ENCODE measurements at regions of chr15 and their contacts with region 1.

Region 1: GRCh38 chr15:63891079-63891767 is 57.5 kb upstream of the HERC1 start:
- DNase-seq: peak; percentile 74
- ATAC-seq: peak; percentile 71
- H3K4me3 Mint-ChIP-seq: no peak overlapping the region
- H3K27ac Mint-ChIP-seq: no peak overlapping the region
- H3K4me1 Mint-ChIP-seq: peaks cover 35% of the 10 kb centered on the region
- H3K27me3 Mint-ChIP-seq: no peaks in the 10 kb centered on the region
- CTCF ChIP-seq: peak; percentile 53

Region 2: GRCh38 chr15:62995047-62995674 is 896.1 kb before region 1 on chr15:
- CTCF ChIA-PET with region 1: no interaction called
- POLR2A ChIA-PET with region 1: no interaction called
- intact Hi-C with region 1: no loop called
- DNase-seq: no peak
- ATAC-seq: no peak
- H3K4me3 Mint-ChIP-seq: no peak overlapping the region
- H3K27ac Mint-ChIP-seq: no peak overlapping the region
- H3K4me1 Mint-ChIP-seq: no peaks in the 10 kb centered on the region
- H3K27me3 Mint-ChIP-seq: peaks cover 27% of the 10 kb centered on the region
- CTCF ChIP-seq: no peak

Region 3: GRCh38 chr15:63752075-63752684 is 139.0 kb before region 1 on chr15:
- CTCF ChIA-PET with region 1: interaction called, 100 read pairs
- POLR2A ChIA-PET with region 1: interaction called, 5 read pairs
- intact Hi-C with region 1: loop called (anchors 1 kb)
- DNase-seq: no peak
- ATAC-seq: peak; percentile 83
- H3K4me3 Mint-ChIP-seq: no peak overlapping the region
- H3K27ac Mint-ChIP-seq: peak overlapping the region; percentile 59
- H3K4me1 Mint-ChIP-seq: peaks cover 3% of the 10 kb centered on the region
- H3K27me3 Mint-ChIP-seq: no peaks in the 10 kb centered on the region
- CTCF ChIP-seq: no peak

Region 4: DNA sequence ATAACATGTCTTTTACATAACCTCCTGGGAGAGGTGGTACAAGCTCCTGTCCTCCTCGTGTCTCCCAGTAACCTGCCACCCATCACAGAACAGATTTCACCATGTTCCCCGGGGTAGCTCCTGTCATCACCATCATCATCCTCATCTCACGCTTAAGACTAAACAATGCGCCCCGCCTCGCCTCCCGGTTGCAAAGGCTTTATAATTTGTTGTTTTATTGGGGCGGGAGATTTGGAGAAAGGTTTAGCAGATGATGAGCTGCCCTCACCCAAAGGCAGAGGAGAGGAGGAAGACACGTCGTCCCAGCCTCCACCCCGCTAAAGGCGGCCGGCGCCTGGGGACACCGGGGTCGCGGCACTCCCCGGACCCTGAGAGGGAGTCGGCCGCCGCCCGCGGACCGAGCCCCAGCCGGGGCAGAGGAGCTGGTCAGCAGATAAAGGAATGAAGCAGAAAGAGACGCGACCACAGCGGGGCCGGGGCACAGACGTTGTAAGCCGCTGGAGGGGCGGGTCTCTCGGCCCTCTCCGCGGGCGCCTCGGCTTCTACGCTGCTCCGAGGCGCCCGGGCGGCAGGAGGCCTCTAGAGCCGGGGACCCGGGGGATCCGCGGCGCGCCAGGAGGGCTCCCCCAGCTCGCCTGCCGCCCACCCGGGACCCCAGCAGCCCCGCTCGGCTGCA is 58.1 kb before region 1 on chr15:
- CTCF ChIA-PET with region 1: interaction called, 9 read pairs
- POLR2A ChIA-PET with region 1: interaction called, 3 read pairs
- intact Hi-C with region 1: loop called (anchors 1 kb)
- DNase-seq: peak; percentile 44
- ATAC-seq: peak; percentile 43
- H3K4me3 Mint-ChIP-seq: peak overlapping the region; percentile 97
- H3K27ac Mint-ChIP-seq: peak overlapping the region; percentile 74
- H3K4me1 Mint-ChIP-seq: peaks cover 48% of the 10 kb centered on the region
- H3K27me3 Mint-ChIP-seq: no peaks in the 10 kb centered on the region
- CTCF ChIP-seq: no peak

Region 5: DNA sequence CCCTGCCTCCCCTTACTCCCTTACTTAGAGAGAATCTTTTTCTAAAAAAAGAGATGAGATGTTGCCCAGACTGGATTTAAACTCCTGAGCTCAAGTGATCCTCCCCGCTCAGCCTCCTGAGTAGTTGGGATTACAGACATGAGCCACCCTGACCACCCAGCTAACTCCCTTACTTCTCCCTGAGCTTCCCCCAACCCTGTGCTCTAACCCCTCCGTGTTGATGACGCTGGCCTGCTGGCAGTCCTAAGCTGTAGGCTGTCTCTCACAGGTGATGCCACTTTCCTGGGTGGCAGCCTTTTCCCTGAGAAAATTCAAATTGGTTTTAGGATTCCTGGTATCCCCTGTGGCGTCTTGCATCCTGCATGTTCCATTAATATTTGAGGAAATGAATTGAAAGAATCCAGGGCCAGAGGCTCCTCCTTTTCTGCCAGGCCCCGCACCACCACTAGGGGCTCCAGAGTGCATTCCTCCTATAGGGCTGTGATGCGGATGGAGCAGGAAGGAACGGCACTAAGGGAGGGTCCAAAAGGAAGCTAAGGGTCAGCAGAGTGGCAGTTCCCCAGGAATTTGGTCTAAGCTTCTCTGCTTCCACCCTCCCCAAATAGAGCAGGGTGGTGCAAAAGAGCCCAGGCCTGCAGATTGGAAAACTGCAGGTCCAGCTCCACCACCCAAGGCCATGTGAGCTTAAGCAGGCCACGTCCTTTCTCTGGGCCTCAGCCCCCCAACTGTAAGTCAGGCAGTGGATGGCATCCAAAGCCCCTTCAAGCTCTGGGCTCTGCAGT is 54.0 kb after region 1 on chr15:
- CTCF ChIA-PET with region 1: interaction called, 16 read pairs
- POLR2A ChIA-PET with region 1: no interaction called
- intact Hi-C with region 1: no loop called
- DNase-seq: peak; percentile 52
- ATAC-seq: peak; percentile 89
- H3K4me3 Mint-ChIP-seq: no peak overlapping the region
- H3K27ac Mint-ChIP-seq: no peak overlapping the region
- H3K4me1 Mint-ChIP-seq: peaks cover 31% of the 10 kb centered on the region
- H3K27me3 Mint-ChIP-seq: no peaks in the 10 kb centered on the region
- CTCF ChIP-seq: peak; percentile 70

Region 6: DNA sequence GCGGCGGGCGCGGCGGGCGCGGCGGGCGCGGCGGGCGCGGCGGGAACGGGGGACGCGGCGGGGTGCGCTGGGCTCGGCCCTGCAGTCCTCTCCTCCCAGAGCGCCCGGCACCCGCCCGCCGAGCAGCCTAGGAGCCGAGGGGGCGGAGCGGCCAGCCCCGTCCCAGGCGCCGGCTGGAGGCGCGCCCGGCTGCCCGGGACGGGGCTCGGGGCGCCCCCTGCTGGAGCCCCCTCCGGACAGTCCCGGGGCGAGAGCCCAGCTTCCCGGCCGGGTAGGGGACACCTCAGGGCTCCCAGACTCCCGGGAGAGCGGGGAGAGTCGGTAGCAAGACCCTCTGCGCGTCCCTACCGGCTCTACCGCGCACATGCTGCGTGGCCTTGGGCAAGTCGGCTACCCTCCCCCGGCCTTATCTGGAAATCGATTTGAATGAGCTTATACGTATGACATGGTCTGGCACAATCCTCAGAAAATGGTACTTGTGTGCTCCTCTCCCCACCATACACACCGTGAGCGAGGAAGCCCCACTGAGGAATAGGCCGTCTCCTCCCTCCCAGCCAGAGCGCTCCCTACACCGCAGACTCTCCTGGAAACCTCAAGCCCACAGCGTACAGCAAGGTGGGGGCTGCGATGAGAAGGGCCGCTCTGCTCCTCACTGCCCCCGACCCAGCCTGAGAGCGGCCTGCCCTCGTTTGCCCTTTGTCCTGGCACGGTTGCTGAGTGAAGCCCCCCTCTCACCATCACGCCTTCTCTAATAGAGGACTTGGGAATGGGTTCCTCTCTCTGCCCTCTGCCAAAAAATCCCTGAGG is 155.3 kb after region 1 on chr15 and contains the start of gene DAPK2:
- CTCF ChIA-PET with region 1: interaction called, 4 read pairs
- POLR2A ChIA-PET with region 1: no interaction called
- intact Hi-C with region 1: loop called (anchors 1 kb)
- DNase-seq: peak; percentile 69
- ATAC-seq: peak; percentile 59
- H3K4me3 Mint-ChIP-seq: peak within 1 kb of the TSS; percentile 76
- H3K27ac Mint-ChIP-seq: peak within 1 kb of the TSS; percentile 7
- H3K4me1 Mint-ChIP-seq: peaks cover 68% of the 10 kb centered on the region
- H3K27me3 Mint-ChIP-seq: no peaks in the 10 kb centered on the region
- CTCF ChIP-seq: no peak
- total RNA-seq, gene DAPK2: 4.2 and 4.3 TPM in 2 replicates